ENCODE measurements at regions of chr22 and their contacts with region 1.

Region 1: GRCh38 chr22:36365020-36365411 is 22.8 kb downstream of the MYH9 start:
- DNase-seq: no peak
- ATAC-seq: peak; percentile 85
- H3K4me3 ChIP-seq: no peak overlapping the region
- H3K27ac ChIP-seq: peak overlapping the region; percentile 58
- H3K4me1 ChIP-seq: peaks cover 74% of the 10 kb centered on the region
- H3K27me3 ChIP-seq: no peaks in the 10 kb centered on the region
- CTCF ChIP-seq: no peak
- EP300 ChIP-seq: peak in 1 of 2 experiments; percentile 50; a peak in 1 of 4 replicates
- POLR2A ChIP-seq: 0 out of 2 replicates have a peak, but pooled peaks have one; percentile 33
- RAD21 ChIP-seq: peak; percentile 12; the same call in 1 of the 2 replicates

Region 2: DNA sequence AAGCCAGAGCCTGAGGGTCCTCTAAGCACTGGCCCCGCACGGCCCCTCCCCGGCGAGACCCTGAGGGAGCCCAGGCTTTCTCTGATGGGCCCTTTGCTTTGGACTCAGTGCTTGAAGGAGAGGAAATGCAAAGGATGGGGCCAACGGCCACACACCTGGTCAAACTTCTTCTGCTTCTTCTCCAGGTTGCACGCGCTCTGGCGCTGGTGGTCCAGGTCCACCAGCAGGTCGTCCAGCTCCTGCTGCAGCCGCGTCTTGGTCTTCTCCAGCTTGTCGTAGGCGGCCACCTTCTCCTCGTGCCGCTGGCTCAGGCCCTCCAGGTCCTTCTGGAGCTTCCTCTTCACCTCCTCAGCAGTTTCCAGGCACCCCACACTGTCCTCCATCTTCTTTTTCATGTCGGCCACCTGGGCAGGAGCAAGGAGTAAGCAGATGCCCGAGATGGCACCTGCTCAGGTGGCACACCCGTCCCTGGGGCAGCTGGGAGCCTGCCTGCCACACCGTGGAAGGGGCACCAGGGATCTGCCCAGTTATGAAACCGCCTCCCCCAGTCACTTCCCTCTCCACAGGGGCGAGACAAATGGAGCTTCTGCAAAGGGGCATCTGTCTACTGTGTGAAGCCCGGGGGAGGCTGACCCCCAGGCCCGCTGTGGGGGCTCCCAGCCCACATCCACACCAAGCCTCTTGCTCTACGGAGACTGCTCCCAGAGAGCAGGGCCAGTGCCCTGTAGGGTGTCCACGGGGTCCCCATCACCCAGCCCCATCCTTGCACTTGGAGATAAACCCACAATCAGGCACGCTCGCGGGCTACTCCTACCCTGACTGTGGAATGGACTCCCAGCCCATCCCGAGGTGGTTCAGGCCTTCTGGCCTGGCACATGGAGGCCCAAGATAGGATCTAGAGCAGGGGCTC is 72.9 kb before region 1 on chr22:
- CTCF ChIA-PET with region 1: no interaction called
- POLR2A ChIA-PET with region 1: no interaction called
- RAD21 ChIA-PET with region 1: no interaction called
- SMC1A ChIA-PET with region 1: no interaction called
- in situ Hi-C with region 1: no loop called
- intact Hi-C with region 1: no loop called
- DNase-seq: no peak
- ATAC-seq: no peak
- H3K4me3 ChIP-seq: no peak overlapping the region
- H3K27ac ChIP-seq: no peak overlapping the region
- H3K4me1 ChIP-seq: no peaks in the 10 kb centered on the region
- H3K27me3 ChIP-seq: no peaks in the 10 kb centered on the region
- CTCF ChIP-seq: no peak
- EP300 ChIP-seq: no peak
- POLR2A ChIP-seq: no peak
- RAD21 ChIP-seq: no peak

Region 3: DNA sequence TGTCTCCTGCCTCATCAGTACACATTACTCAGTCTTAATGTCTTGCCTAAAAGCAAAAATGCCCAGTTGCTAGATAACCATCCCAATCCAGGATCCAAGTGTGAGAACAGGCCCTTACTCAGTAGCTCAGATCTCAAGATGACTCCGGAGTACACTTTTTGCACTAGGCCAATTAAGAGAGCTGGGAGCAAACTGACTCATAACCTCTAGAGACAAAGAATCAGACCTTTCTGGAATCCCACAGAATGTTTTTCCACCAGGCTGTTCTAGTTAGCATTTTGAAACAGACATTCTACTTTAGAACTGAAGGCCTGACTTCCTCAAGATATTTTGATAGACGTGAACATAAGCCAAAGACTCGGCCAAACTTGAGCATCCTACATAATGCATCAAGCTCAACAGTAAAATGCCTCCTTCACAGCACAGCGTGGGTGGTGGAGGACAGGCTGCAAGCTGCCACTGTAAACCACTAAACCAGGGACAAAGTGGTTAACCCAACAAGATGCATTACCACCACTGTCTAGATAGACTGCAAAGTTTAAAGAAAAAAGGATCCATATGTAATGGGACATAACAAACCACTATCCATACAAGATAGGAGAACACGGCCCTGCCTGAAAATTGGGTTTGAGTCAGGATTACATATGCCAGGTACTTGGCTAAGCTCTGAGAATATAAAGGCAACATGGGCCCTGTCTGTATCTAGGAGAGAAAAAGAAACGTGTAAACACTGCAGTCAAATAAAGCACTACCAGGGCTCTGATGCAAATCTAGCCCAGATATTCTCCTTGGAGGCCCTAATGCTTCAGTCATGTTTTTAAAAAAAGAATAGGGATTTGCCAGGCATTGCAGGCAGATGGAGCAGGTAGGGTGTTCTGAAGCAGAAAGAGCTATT is 25.6 kb before region 1 on chr22:
- CTCF ChIA-PET with region 1: no interaction called
- POLR2A ChIA-PET with region 1: interaction called, 18 read pairs
- RAD21 ChIA-PET with region 1: interaction called, 3 read pairs
- SMC1A ChIA-PET with region 1: interaction called, 3 read pairs
- in situ Hi-C with region 1: no loop called
- intact Hi-C with region 1: no loop called
- DNase-seq: no peak
- ATAC-seq: no peak
- H3K4me3 ChIP-seq: no peak overlapping the region
- H3K27ac ChIP-seq: no peak overlapping the region
- H3K4me1 ChIP-seq: peaks cover 4% of the 10 kb centered on the region
- H3K27me3 ChIP-seq: no peaks in the 10 kb centered on the region
- CTCF ChIP-seq: no peak
- EP300 ChIP-seq: no peak
- POLR2A ChIP-seq: no peak
- RAD21 ChIP-seq: no peak

Region 4: GRCh38 chr22:36379593-36380361 is 14.8 kb after region 1 on chr22:
- CTCF ChIA-PET with region 1: interaction called, 11 read pairs
- POLR2A ChIA-PET with region 1: interaction called, 21 read pairs
- RAD21 ChIA-PET with region 1: interaction called, 10 read pairs
- SMC1A ChIA-PET with region 1: interaction called, 20 read pairs
- in situ Hi-C with region 1: no loop called
- intact Hi-C with region 1: no loop called
- DNase-seq: no peak
- ATAC-seq: peak; percentile 47
- H3K4me3 ChIP-seq: peak overlapping the region; percentile 70
- H3K27ac ChIP-seq: peak overlapping the region; percentile 78
- H3K4me1 ChIP-seq: peaks cover 70% of the 10 kb centered on the region
- H3K27me3 ChIP-seq: no peaks in the 10 kb centered on the region
- CTCF ChIP-seq: no peak
- EP300 ChIP-seq: no peak
- POLR2A ChIP-seq: peak; percentile 51
- RAD21 ChIP-seq: no peak

Region 5: DNA sequence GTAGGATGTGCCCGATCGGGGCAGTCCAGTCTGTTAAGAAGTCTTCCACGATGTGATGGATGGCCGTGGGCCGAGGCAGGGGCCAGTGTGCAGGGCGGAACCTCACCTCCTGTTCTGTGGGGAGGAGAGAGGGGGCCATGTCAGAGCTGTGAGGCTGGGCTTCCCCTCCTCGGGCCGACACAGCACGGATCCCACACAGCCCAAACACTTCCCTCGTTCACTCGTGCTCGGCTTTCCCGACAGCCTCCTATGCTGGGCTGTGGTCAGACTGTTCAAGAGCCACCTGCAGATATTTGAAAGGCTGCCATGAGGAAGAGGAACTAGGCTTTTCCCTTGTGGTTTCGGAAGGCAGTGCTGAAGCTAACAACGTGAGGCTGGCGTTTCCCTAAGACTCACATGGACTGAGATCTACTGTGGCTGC is 128.7 kb after region 1 on chr22:
- CTCF ChIA-PET with region 1: no interaction called
- POLR2A ChIA-PET with region 1: no interaction called
- RAD21 ChIA-PET with region 1: no interaction called
- SMC1A ChIA-PET with region 1: no interaction called
- in situ Hi-C with region 1: no loop called
- intact Hi-C with region 1: no loop called
- DNase-seq: peak; percentile 63
- ATAC-seq: peak; percentile 93
- H3K4me3 ChIP-seq: no peak overlapping the region
- H3K27ac ChIP-seq: peak overlapping the region; percentile 78
- H3K4me1 ChIP-seq: peaks cover 15% of the 10 kb centered on the region
- H3K27me3 ChIP-seq: no peaks in the 10 kb centered on the region
- CTCF ChIP-seq: no peak
- EP300 ChIP-seq: 0 out of 4 replicates have a peak, but pooled peaks of 1 of the 2 experiments have one; percentile 20
- POLR2A ChIP-seq: no peak
- RAD21 ChIP-seq: no peak